PC-9 (cell line): ENCODE measurements at regions of chr3 and their contacts with region 1.

Region 1: DNA sequence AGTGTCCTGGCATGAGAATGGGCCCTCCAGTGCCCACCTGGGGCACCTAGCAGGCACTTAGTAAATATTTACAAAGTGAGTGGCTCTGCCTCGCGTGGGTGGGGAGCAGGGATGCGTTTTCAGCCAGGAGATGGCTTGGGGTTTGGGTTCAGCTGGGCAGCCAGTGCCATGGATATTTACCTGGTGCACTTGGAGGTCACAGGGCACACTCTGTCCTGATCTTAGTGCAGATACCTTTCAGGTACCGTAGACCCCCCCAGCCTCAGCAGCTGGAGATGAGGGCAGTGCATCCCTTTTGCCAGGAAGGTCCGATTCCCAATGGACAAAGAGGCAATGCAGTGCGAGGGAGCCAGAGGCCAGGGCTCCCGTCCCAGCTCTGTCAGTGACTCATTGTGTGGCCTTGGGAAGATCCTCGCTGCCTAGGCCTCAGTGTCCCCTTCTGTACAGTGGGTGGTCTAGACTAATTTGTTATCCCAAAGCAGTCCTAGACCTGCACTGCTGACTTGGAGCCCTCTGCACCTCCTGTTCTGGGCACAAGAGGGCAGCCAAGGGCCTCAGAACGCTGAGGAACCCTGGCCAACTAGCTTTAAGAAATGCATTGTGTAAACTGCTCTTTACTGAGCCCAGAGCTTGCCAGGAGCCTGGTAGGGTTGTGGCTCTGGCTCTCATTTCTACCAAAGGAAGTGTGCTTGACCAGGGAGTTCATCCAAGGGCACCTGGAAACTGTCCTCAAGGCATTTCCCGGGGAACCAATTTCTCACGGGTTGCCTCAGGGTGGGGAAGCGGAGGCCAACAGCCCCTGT is 16.0 kb downstream of the HDAC11 start:
- DNase-seq: peak; percentile 56 to 78
- H3K4me3 ChIP-seq: no peak overlapping the region
- H3K27ac ChIP-seq: no peak overlapping the region
- H3K4me1 ChIP-seq: peaks cover 8% of the 10 kb centered on the region
- H3K27me3 ChIP-seq: no peaks in the 10 kb centered on the region
- CTCF ChIP-seq: peak; percentile 97

Region 2: DNA sequence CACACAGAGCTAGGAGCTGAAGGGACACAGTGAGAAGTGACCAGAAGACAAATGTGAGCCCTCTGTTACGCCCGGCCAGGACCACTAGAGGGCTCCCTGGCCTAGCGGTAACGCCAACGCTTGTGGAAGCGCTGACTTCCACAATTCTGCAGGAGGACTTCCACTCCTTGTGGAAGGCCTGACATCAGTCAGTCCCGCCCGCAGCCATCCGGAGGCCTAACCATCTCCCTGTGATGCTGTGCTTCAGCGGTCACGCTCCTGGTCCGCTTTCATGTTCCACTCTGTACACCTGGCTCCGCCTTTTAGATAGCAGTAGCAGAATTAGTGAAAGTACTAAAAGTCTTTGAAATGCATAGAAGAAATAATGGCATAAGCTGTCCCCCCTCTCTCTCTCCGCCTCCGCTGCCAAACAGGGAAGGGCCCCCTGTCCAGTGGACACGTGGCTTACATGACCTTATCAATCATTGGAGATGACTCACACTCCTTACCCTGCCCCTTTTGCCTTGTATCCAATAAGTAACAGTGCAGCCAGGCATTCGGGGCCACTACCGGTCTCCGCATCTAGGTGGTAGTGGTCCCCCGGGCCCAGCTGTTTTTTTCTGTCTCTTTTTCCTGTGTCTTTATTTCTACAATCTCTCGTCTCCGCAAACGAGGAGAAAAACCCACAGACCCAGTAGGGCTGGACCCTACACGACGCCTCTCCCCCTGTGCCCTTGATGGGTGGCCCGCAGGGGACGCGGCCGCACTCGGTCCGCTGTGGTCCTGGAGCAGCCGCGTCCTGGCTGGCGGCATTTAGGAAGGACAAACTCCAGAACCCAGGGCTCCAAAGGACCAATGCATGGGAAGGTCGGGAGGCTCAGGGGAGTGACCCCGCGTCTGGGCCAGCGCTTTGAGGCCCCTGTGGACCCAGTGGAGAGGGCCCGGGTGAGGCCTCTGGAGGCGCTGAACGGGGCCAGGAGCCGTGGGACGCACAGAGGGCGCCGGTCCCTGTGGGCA is 627.8 kb before region 1 on chr3:
- CTCF ChIA-PET with region 1: no interaction called
- POLR2A ChIA-PET with region 1: no interaction called
- intact Hi-C with region 1: loop called (anchors 2 kb)
- DNase-seq: peak; percentile 65 to 82
- H3K4me3 ChIP-seq: no peak overlapping the region
- H3K27ac ChIP-seq: no peak overlapping the region
- H3K4me1 ChIP-seq: no peaks in the 10 kb centered on the region
- H3K27me3 ChIP-seq: peaks cover 56% of the 10 kb centered on the region
- CTCF ChIP-seq: peak; percentile 89

Region 3: DNA sequence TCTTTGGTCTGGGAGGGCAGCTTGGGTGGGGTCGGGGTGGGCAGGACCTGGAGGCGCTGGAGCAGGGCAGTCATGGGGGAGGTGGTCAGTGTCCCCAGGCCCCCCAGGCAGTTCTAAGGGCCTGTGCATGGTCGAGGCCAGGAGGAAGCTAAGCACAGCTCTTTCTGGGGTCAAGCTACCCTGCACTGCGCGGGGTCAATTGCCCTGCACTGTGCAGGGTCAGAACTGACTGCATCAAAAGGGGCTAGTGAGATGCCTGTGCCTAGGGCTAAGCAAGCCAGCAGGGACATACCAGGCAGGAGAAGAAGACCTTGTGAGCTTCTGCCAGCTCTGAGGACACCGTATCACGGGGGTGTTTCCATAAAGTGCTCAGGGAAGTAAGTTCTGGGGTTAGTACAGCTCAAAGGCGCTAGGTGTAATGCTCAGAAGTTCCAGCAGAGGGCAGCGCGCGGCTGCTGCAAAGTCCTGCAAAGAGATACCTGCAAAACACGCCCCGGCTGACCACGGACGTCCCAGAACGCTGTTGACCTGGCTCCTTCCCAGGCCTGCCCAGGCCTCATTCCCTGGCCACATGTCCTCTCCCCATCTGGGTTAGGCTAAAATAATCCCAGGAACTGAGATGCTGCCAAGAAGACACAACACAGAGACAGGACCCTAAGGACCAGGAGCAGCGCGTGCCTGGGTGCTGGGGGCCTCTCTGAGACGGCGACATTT is 404.1 kb before region 1 on chr3:
- CTCF ChIA-PET with region 1: interaction called, 3 read pairs
- POLR2A ChIA-PET with region 1: no interaction called
- intact Hi-C with region 1: loop called (anchors 1 kb)
- DNase-seq: peak; percentile 69 to 87
- H3K4me3 ChIP-seq: no peak overlapping the region
- H3K27ac ChIP-seq: no peak overlapping the region
- H3K4me1 ChIP-seq: peaks cover 18% of the 10 kb centered on the region
- H3K27me3 ChIP-seq: no peaks in the 10 kb centered on the region
- CTCF ChIP-seq: peak; percentile 98

Region 4: DNA sequence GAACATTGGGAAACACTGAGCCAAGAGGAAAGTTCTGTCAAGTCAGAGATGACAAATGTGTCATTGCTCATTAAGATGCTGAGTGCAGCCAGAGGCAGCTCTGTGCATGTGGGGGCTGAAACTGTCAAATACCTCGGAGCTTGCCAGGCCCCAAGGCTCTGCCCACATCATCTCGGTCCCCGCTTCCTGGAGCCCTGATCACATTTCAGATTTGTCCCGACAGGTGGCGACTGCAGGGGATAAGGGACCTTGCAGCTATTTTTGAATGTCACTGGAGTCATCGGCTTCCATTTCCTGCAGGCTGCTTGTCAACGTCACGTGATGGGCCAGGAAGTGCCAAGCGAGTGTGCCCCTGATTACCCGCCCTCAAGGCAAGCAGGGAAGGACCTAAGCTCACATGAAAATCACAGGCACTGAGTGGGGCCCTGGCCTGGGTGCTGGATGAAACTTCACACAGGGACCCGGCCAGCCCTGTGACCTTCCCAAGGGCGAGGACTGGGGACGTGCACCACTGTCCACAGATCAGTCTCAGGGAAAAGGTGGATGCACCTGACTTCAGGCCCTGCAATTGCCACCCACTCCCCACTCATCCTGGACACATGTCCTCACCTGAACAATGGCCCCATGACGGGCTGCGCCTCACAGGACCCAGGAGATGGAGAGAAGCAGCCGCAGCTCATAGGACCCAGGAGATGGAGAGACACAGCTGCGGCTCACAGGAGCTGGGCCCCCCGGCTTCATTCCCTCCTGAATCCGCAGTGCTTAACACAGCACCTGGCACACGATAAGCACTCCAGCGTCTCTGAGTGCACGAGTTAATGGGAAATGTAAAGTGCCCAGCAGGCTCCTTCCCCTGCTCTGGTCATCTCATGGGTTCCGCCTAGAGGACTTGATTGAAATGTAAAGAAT is 149.4 kb before region 1 on chr3:
- CTCF ChIA-PET with region 1: no interaction called
- POLR2A ChIA-PET with region 1: no interaction called
- intact Hi-C with region 1: no loop called
- DNase-seq: no peak
- H3K4me3 ChIP-seq: no peak overlapping the region
- H3K27ac ChIP-seq: no peak overlapping the region
- H3K4me1 ChIP-seq: no peaks in the 10 kb centered on the region
- H3K27me3 ChIP-seq: no peaks in the 10 kb centered on the region
- CTCF ChIP-seq: no peak

Region 5: DNA sequence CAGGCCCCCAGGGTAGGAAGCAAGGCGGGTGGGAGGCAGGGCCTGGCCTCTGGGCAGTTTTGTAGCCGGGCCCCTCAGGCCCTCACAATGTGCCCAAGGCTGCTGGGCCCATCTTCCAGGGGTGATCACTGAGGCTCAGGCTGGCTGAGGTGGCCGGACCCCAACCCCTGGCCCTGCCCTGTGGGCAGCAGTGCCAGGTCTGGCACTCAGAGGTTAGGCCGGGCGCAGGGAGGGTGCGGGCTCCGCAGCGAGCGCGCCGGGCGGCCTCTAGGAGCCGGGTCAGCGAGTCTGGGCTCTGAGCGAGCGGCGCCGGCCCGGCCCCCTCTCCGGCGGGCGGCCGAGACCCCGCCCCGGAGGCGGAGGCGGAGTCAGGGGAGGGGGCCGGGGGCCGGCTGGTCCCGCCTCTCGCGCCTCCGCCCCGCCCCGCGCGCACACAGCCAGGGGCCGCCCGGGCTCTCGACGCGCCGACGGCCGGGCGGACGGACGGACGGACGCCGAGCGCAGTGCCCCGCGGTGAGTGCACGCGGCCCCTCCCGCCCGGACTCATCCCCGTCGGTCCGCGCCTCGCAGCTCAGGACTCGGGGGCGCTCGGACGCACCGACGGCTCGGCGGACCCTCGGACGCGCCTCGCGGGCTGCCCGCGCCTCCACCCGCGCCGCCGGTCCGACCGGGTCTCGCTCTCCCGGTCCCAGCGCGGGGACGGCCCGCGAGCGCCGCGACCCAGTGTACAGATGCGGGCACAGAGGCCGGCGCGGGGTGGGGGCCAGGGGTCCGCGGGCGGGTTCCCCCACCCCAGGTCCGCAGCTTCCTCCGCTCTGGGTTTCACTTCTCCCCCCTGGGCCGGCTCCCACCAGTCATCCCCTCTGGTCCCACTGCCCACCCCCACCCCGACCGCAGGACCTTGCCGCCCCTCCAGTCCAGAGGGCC is 52.8 kb after region 1 on chr3 and contains the start of gene FBLN2:
- CTCF ChIA-PET with region 1: no interaction called
- POLR2A ChIA-PET with region 1: no interaction called
- intact Hi-C with region 1: loop called (anchors 5 kb)
- DNase-seq: no peak
- H3K4me3 ChIP-seq: no peak within 1 kb of the TSS
- H3K27ac ChIP-seq: no peak within 1 kb of the TSS
- H3K4me1 ChIP-seq: peaks cover 22% of the 10 kb centered on the region
- H3K27me3 ChIP-seq: no peaks in the 10 kb centered on the region
- CTCF ChIP-seq: no peak
- total RNA-seq, gene FBLN2: 0.57 and 1.8 TPM in 2 replicates

Region 6: DNA sequence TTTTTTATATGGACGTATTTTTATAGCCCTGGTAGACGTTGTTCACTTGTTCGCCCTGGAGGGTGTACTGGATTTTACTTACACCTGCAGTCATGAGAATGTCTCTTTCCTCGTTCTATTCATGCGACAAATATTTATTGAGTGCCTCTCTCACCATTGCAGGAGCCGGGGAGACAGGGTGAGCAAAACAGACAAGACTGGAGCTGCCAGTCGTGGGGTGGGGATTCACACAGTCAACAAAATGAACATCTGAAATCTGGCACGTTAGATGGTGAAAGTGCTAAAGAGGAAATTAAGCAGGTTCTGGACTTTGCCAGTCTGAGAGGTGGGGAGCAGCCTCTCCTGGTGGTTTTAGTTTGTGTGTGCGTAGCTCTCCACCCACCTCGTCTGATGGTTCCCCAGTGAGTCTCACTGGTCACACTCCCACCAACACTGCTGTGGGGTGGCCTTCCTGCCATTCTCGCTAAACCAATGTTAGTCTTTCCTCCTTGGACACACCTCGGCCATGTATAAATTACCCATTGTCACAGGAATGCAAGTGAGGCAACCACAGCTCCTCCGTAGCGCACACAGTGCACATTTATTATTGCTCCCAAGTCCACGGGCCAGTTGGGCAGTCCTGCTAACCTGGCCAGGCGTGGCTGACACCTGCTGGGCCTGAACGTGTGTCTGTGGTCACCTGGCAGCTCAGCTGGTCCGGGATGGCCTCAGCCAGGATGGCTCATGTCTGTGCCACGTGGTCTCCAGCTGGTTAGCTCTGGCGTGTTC is 84.3 kb after region 1 on chr3:
- CTCF ChIA-PET with region 1: no interaction called
- POLR2A ChIA-PET with region 1: no interaction called
- intact Hi-C with region 1: loop called (anchors 1 kb)
- DNase-seq: peak; percentile 69 to 91
- H3K4me3 ChIP-seq: no peak overlapping the region; the same call in 1 of the 2 replicates
- H3K27ac ChIP-seq: peak overlapping the region; percentile 72
- H3K4me1 ChIP-seq: peaks cover 31% of the 10 kb centered on the region
- H3K27me3 ChIP-seq: no peaks in the 10 kb centered on the region
- CTCF ChIP-seq: no peak

Region 7: DNA sequence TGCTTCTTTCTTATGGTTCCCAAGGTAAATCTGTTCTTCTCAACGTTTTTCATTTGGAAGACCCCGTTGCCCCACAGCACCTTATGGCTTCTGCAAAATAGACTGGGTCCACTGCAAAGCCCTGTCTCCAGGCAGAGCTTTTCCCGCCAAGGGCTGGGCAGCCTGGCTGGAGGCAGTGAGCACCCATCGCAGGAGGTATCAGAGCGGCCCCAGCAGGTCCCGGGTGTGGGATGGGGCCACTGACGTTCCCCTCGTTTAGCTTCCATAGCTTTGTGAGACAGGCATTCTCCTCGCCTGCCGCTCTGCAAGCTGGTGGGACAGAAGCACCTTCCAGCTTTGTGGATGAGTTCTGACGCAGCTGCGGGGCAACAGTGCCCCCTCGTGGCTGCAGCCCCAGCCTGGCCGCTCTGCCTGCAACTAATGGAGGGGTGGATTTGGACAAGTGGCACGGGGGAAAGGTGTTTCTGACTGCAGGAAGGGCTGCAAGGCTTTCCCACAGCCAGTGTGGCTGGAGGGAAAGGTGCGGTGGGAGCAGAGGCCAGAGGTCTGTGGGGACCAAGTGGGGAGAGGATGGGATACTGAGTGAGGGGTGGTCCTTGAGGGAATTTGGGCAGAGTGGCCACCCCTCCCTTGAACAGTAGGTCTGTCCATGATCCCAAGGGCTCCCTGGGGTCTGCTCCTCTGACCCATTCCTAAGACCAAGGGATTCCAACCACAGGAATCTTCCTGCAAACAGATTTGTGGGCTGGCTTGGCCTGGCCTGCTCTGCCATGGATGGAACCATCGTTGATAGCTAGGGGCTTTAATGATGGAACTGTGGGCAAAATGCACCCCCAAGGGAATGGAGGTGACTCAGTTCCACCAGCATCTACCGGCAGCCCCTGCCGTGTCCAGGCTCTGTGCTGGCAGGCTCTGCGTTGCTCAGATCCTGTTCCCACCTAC is 152.2 kb after region 1 on chr3:
- CTCF ChIA-PET with region 1: interaction called, 31 read pairs
- POLR2A ChIA-PET with region 1: interaction called, 4 read pairs
- intact Hi-C with region 1: loop called (anchors 1 kb)
- DNase-seq: peak; percentile 54 to 85
- H3K4me3 ChIP-seq: no peak overlapping the region
- H3K27ac ChIP-seq: no peak overlapping the region
- H3K4me1 ChIP-seq: peaks cover 47% of the 10 kb centered on the region
- H3K27me3 ChIP-seq: no peaks in the 10 kb centered on the region
- CTCF ChIP-seq: peak; percentile 99

Region 8: GRCh38 chr3:13822042-13822441 is 325.9 kb after region 1 on chr3:
- CTCF ChIA-PET with region 1: no interaction called
- POLR2A ChIA-PET with region 1: no interaction called
- intact Hi-C with region 1: no loop called
- DNase-seq: peak in 1 of 2 experiments; percentile 53
- H3K4me3 ChIP-seq: no peak overlapping the region
- H3K27ac ChIP-seq: no peak overlapping the region
- H3K4me1 ChIP-seq: peaks cover 55% of the 10 kb centered on the region
- H3K27me3 ChIP-seq: no peaks in the 10 kb centered on the region
- CTCF ChIP-seq: no peak

Region 9: DNA sequence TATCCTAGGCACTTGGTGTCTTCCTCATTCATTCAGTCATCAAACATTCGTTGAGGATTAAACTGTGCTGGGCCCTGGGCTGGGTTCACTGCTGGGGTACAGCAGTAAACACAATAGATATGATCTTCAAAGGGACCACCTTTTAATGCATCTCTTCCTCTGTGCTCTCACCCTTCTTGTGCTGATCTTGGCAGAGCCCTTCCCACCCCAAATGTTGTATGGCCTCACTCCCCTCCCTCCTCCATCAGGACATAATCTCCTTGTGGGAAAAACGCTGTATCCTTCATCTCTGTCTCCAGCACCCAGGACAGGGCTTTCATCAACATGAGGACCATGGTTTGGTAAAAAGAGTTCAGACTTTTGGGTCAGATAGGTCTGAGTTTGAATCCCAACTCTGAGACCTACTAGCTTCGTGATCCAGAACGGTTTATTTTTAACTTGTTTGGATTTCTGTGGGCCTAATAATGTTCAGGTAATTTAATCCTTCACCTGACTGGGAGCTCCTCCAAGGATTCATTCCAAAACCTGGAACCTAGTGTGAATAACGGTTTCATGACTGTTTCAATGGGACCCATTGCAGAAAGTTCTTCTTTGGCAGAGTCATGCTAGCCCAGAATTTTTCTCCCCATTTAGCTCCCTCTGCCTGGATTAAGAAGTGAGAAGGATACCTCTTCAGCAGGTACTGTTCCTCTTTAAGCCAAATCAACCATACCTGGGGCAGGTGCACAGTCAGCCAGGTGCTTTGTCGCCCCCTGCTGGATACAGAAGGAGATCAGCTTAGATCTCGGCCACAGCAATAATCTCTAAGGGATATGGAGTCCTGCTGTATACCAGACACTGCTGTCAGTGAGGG is 389.0 kb after region 1 on chr3:
- CTCF ChIA-PET with region 1: no interaction called
- POLR2A ChIA-PET with region 1: interaction called, 4 read pairs
- intact Hi-C with region 1: loop called (anchors 1 kb)
- DNase-seq: peak; percentile 49 to 72
- H3K4me3 ChIP-seq: no peak overlapping the region
- H3K27ac ChIP-seq: no peak overlapping the region
- H3K4me1 ChIP-seq: peaks cover 7% of the 10 kb centered on the region
- H3K27me3 ChIP-seq: no peaks in the 10 kb centered on the region
- CTCF ChIP-seq: peak; percentile 98